ENCODE measurements at regions of chr7 and their contacts with region 1.

Region 1: DNA sequence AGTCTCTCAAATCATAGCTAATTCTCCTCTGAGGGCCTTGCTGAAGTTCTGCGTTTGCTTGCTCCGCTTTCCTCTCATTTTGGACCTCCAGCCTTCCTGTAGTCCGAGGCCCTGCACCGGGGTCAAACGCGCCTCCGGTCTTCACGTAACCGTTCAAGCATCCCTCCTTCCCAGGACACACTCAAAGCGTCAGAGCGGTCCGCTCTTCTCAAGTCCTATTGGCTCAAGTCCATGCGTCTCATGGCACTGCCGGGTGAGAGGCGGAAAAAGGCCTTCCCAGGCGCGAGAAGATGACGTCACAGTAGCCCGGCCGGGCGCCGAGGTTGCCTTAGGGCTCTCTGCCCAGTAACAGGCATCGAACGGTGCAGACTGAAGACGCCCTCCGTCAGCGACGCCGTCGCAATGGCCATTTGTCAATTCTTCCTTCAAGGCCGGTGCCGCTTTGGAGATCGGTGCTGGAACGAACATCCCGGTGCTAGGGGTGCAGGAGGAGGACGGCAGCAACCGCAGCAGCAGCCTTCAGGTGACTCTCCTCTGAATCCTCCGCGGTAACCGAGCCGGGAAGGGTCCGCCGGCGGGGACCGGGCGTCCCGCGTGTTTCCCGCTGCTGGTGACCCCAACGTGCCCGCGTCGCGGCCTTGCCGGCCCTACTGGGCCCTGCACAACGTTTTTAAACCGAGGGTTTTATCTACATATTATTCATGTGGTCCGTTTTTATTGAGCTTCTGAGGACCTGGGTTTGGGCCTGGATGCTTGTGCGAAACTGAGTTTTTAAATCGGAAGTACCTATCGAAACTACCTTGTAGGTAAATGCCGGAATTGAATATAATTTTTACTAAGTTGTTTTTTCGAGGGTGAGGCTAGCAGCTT is at the start of gene NUP42:
- DNase-seq: peak; percentile 98
- H3K4me3 Mint-ChIP-seq: peak within 1 kb of the TSS; percentile 99
- H3K27ac Mint-ChIP-seq: peak within 1 kb of the TSS; percentile 99
- H3K4me1 Mint-ChIP-seq: peaks cover 35% of the 10 kb centered on the region
- H3K27me3 Mint-ChIP-seq: no peaks in the 10 kb centered on the region
- total RNA-seq, gene NUP42: 15.2 to 17.0 TPM

Region 2: GRCh38 chr7:22726345-22727185 is 455.4 kb before region 1 on chr7:
- CTCF ChIA-PET with region 1: no interaction called
- intact Hi-C with region 1: no loop called
- DNase-seq: peak; percentile 76
- H3K4me3 Mint-ChIP-seq: peak overlapping the region; percentile 70
- H3K27ac Mint-ChIP-seq: peak overlapping the region; percentile 89
- H3K4me1 Mint-ChIP-seq: peaks cover 30% of the 10 kb centered on the region
- H3K27me3 Mint-ChIP-seq: peaks cover 24% of the 10 kb centered on the region

Region 3: GRCh38 chr7:22854158-22855048 is 327.5 kb before region 1 on chr7:
- CTCF ChIA-PET with region 1: no interaction called
- intact Hi-C with region 1: loop called (anchors 2 kb)
- DNase-seq: peak; percentile 78
- H3K4me3 Mint-ChIP-seq: peak overlapping the region; percentile 87
- H3K27ac Mint-ChIP-seq: peak overlapping the region; percentile 94
- H3K4me1 Mint-ChIP-seq: peaks cover 32% of the 10 kb centered on the region
- H3K27me3 Mint-ChIP-seq: peaks cover 3% of the 10 kb centered on the region

Region 4: DNA sequence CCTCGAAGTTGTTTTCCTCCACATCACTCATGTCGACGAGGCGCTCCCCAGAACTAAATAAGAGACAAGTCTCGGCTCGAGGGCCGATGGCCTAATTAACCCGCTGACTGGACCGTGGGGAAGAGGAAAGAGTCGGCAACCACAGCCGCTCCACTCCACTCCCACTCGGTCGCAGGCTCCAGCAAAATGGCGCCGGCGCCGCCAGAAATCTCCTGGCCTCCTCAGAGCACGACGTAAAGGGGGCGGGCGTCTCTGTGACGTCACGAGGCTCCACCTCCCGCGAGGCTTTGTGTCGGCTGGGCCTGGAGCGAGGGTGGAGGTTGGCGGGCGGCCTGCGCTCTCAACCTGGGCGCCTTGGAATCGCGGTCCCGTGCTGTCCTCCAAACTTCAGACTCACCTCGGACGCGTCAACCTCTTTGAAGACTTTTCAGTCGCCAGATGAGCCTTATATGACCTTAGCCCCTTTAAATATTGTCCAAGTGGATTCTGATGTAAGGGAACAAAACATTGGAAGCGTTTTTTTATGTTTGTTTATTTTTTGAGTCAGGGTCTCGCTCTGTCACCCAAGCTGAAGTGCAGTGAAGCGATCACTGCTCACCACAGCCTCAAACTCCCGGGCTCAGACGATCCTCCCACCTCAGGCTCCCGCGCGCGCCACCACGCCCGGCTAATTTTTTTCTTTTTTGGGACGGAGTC is 350.0 kb after region 1 on chr7 and contains the start of gene TRA2A:
- CTCF ChIA-PET with region 1: interaction called, 3 read pairs
- intact Hi-C with region 1: loop called (anchors 2 kb)
- DNase-seq: peak; percentile 99
- H3K4me3 Mint-ChIP-seq: peak within 1 kb of the TSS; percentile 99
- H3K27ac Mint-ChIP-seq: peak within 1 kb of the TSS; percentile 100
- H3K4me1 Mint-ChIP-seq: peaks cover 43% of the 10 kb centered on the region
- H3K27me3 Mint-ChIP-seq: no peaks in the 10 kb centered on the region
- total RNA-seq, gene TRA2A: 77.8 to 79.0 TPM